ENCODE measurements at regions of chr2 and their contacts with region 1.

Region 1: DNA sequence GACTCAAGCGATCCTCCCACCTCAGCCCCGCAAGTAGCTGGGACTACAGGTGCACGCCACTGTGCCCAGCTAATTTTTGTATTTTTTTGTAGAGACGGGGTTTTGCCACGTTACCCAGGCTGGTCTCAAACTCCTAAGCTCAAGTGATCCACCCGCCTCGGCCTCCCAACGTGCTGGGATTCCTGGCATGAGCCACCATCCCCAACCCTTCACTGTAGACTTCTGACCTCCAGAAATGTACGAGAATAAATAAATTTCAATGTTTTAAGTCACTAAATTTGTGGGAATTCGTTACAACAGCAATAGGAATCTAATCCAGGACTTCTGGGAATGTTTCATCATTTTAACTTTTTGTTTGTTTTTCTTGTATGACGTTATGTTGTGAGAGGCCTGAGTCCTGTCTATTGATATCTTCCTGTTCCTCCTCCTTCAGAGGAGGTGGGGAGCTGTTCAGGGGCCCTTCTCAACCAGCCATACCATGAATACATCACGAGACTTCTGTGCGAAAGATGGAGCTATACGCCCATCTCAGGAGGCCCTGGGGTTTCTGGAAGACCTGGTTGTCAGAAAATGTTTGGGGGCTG is 40.0 kb downstream of the TEX44 start:
- DNase-seq: peak; percentile 96
- ATAC-seq: peak; percentile 92
- H3K4me3 ChIP-seq: no peak overlapping the region
- H3K27ac ChIP-seq: peak overlapping the region; percentile 79; the same call in 1 of the 2 replicates
- H3K4me1 ChIP-seq: peaks cover 28% of the 10 kb centered on the region
- H3K27me3 ChIP-seq: no peaks in the 10 kb centered on the region
- CTCF ChIP-seq: 0 out of 2 replicates have a peak, but pooled peaks have one; percentile 13
- POLR2A ChIP-seq: no peak
- RAD21 ChIP-seq: no peak

Region 2: DNA sequence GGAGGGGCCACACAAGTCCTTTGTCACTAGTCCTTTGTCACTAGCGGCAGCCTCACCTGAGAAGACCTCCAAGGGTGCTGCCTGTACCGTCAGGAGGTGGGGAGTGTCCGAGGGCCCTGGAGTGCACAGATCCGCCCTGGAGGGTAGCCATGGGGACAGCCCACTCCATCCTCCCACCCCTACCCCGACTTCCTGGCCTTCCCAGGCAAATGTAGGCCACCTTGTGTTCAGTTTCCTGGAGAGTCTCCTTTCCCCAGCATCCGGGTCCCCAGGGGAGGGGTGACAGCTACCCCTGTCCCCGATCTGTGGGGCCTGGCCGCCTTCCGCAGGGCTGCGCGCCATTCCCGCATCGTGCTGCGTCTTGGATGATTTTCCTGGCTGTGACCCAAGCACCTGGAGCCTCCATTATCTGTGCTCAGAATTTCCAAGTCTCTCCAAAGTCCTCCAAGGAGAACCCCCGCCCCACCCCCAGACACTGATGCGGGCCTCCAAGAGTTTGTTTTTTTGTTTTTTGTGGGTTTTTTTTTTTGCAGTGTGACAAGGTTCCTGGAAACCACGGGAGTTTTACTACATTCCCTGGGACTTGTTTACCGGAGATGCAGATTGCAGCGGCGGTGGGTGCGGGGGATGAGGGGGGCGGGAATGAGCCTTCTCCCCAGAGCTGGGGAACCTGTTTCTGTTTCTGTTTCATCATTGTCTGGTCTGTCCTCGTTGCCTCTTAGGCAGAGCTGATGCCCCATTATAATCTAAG is 11.3 kb before region 1 on chr2:
- CTCF ChIA-PET with region 1: no interaction called
- POLR2A ChIA-PET with region 1: interaction called, 16 read pairs
- dilution Hi-C with region 1: no loop called
- in situ Hi-C with region 1: no loop called
- intact Hi-C with region 1: no loop called
- DNase-seq: no peak
- ATAC-seq: peak; percentile 51
- H3K4me3 ChIP-seq: no peak overlapping the region
- H3K27ac ChIP-seq: no peak overlapping the region
- H3K4me1 ChIP-seq: peaks cover 1% of the 10 kb centered on the region; the same call in 1 of the 2 replicates
- H3K27me3 ChIP-seq: no peaks in the 10 kb centered on the region
- CTCF ChIP-seq: no peak
- POLR2A ChIP-seq: no peak
- RAD21 ChIP-seq: no peak

Region 3: DNA sequence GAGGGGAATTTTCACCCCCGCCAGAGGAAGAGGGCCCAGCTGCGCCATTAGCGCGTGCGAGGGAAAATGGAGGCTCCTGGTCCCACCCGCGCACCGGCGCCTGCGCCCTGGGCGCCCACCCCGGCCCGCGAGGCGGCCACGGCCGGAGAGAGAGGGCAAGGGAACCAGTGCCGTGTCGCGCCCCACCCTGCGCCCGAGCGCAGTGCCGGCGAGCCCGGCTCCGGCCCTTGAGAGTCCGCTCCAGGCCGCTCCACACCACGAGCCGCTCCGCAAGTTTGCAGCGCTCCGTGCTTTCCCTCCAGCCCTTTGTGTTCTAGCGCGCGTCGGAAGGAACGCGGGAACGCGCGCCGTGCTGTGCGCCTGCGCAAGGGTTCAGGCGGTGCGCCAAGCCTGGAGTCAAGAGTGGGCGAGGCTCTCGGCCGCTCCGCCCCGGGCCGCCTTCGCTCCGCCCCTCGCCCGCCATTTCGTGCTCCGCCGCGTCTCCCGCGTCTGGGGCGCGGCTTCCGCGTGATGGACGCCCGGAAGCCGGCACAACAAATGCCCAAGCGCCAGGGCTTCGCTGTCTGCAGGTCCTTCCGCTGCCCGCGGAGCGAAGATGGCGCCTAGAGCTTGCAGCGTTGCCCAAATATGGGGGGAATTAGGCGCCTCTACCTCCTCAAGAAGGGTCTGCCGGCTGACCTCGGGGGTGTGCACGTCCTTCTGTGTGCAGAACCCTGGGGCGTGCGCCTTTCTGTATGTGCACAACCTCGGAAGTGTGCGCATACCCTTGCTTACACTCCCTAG is 29.6 kb after region 1 on chr2:
- CTCF ChIA-PET with region 1: no interaction called
- POLR2A ChIA-PET with region 1: no interaction called
- dilution Hi-C with region 1: no loop called
- in situ Hi-C with region 1: no loop called
- intact Hi-C with region 1: loop called (anchors 1 kb)
- DNase-seq: peak; percentile 95
- ATAC-seq: peak; percentile 73
- H3K4me3 ChIP-seq: peak overlapping the region; percentile 20
- H3K27ac ChIP-seq: peak overlapping the region; percentile 55
- H3K4me1 ChIP-seq: peaks cover 14% of the 10 kb centered on the region
- H3K27me3 ChIP-seq: no peaks in the 10 kb centered on the region
- CTCF ChIP-seq: 0 out of 2 replicates have a peak, but pooled peaks have one; percentile 8
- POLR2A ChIP-seq: peak; percentile 60; the same call in 1 of the 2 replicates
- RAD21 ChIP-seq: peak; percentile 18

Measured in IMR-90 (cell line).